Activated B cell treated with CpG ODN at 0.5 μM for 24 hours (primary cell): ENCODE measurements at regions of chr12 and their contacts with region 1.

Region 1: DNA sequence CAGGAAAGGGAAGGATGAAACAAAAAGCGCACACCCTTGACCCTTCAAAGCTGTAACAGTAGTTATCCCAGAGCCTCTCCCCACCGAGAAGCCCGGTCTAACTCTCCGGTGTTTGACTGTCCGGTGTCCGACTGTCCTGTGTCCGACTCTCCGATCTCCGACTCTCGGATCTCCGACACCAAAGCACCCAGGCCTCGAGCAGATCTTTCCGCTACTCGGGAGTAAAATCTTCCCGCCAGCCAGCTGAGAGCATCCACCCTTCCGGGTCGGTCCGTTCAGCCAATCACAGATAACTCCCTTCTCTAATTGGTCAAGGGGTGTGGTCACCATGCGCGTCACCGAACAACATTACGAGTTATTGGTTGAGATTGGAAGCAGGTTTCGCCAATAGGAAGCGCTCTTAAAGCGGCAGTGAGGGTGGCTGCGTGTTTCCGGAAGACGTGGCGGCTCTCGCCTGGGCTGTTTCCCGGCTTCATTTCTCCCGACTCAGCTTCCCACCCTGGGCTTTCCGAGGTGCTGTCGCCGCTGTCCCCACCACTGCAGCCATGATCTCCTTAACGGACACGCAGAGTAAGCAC is at the starts of genes GOLT1B and RECQL:
- DNase-seq: peak; percentile 71
- ATAC-seq: peak; percentile 95
- H3K4me3 Mint-ChIP-seq: no peak within 1 kb of the TSS
- H3K27ac Mint-ChIP-seq: no peak within 1 kb of the TSS
- H3K4me1 Mint-ChIP-seq: peaks cover 41% of the 10 kb centered on the region
- H3K27me3 Mint-ChIP-seq: no peaks in the 10 kb centered on the region
- CTCF ChIP-seq: no peak
- total RNA-seq, gene GOLT1B: 23.6 and 25.9 TPM in 2 replicates
- total RNA-seq, gene RECQL: 60.6 and 61.6 TPM in 2 replicates

Region 2: GRCh38 chr12:21486000-21486399 is 15.5 kb before region 1 on chr12:
- CTCF ChIA-PET with region 1: no interaction called
- POLR2A ChIA-PET with region 1: interaction called, 6 read pairs
- intact Hi-C with region 1: loop called (anchors 2 kb)
- DNase-seq: no peak
- ATAC-seq: no peak
- H3K4me3 Mint-ChIP-seq: no peak overlapping the region
- H3K27ac Mint-ChIP-seq: no peak overlapping the region
- H3K4me1 Mint-ChIP-seq: no peaks in the 10 kb centered on the region
- H3K27me3 Mint-ChIP-seq: no peaks in the 10 kb centered on the region
- CTCF ChIP-seq: no peak

Region 3: DNA sequence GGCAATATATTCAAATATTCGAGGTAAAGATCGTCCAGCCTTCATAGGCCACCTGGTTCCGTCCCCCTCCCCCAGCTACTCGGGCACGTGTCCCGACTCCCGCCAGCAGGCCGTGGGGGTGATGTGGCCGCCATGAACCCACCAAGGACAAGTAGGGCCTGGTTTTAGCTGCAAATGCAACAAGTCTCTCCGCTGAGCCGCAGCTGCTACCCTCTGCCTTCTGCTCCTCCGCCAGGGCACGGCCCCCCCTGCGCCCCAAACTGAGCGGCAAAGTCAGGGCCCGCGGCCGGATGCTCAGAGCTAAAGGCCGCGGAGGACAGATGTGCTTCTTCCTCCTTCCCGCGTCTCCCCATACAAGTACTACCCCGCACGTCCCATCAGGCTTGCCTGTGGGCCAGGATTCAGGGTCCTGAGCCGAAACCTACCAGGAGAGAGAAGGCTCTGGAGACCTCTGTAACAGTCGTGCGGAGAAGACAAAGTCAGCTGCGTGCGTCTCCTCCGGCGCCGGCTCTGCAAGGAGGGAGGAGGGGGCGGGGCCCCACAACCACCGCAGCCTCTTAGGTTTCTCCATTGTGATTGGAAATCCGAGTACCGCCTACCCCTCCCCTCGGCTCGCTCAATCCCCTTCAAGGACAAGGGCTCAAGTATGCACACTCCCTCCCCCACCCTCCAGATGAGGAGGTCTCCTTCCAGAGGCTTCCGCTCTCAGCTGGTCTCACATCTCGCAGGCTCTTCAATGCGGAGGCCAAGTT is 156.0 kb after region 1 on chr12 and contains the start of gene LDHB:
- CTCF ChIA-PET with region 1: no interaction called
- POLR2A ChIA-PET with region 1: interaction called, 36 read pairs
- intact Hi-C with region 1: loop called (anchors 1 kb)
- DNase-seq: peak; percentile 72
- ATAC-seq: peak; percentile 97
- H3K4me3 Mint-ChIP-seq: peak within 1 kb of the TSS; percentile 99
- H3K27ac Mint-ChIP-seq: peak within 1 kb of the TSS; percentile 97
- H3K4me1 Mint-ChIP-seq: peaks cover 24% of the 10 kb centered on the region
- H3K27me3 Mint-ChIP-seq: peaks cover 3% of the 10 kb centered on the region
- CTCF ChIP-seq: no peak
- total RNA-seq, gene LDHB: 385 and 440 TPM in 2 replicates

Region 4: DNA sequence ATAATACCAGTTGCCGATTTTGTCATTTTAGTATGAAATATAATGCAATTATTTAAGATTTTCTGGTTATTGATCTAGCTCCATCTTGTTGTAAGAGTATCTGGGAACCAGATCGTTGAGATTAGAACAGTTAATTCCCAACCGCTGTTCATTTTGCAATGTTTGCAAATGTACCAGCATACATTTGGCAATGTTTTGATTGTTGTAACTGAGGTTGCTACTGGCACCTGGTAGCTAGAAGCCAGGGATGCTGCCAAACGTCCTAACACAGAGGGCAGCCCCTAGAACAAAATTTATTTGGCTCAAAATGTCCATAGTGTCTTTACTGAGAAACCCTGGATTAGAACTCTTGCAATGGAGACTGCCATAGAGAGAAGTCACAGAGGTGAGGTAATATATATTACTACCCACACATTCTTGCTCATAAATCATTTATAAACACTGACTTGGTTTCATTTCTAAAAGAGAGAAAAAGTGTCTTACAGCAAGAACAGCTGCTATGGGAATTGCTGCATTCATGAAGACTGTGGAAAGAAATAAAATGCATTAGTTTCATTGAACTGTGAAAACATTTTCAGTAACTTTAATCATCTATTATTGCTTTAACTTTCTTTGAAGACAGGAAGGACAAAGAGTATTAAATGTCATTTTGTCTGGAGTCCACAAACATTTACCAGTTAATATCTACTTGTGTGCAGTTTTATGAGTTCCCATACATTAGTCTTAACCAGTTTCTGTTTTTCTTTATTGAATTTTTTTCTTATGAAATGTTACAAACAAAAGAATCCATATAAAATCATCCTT is 393.5 kb after region 1 on chr12:
- CTCF ChIA-PET with region 1: no interaction called
- POLR2A ChIA-PET with region 1: no interaction called
- intact Hi-C with region 1: no loop called
- DNase-seq: no peak
- ATAC-seq: no peak
- H3K4me3 Mint-ChIP-seq: no peak overlapping the region
- H3K27ac Mint-ChIP-seq: no peak overlapping the region
- H3K4me1 Mint-ChIP-seq: no peaks in the 10 kb centered on the region
- H3K27me3 Mint-ChIP-seq: no peaks in the 10 kb centered on the region
- CTCF ChIP-seq: no peak

Region 5: DNA sequence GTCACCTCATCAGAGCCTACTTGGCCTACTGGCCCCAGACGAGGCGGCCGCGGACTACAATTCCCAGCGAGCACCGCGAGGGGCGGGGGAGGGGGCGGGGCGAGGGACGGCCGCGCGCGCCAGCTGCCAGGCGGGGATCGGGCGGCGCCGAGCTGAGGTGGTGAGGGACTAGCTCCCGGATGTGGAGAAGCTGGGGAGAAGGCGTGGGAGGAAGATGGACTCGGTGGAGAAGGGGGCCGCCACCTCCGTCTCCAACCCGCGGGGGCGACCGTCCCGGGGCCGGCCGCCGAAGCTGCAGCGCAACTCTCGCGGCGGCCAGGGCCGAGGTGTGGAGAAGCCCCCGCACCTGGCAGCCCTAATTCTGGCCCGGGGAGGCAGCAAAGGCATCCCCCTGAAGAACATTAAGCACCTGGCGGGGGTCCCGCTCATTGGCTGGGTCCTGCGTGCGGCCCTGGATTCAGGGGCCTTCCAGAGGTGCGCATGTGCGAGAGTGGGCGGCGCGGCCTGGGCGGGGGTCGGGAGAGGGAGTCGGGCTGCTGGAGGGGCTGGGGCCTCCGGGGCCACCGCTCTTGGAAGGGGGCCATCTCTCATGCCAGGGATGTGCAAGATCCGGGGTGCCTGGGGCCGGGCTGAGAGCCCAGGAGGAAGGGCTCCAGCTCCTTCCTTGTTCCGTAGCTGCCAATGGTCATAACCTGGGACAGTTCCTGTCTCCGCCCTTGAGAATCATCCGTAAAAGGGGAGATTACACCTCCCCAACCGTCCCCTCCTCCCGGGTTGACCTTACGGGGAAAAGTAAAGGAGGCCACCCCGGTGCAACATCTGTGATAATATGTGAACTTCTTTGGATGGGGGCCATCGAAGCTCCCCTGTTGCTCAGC is 544.9 kb after region 1 on chr12 and contains the start of gene CMAS:
- CTCF ChIA-PET with region 1: no interaction called
- POLR2A ChIA-PET with region 1: no interaction called
- intact Hi-C with region 1: loop called (anchors 1 kb)
- DNase-seq: peak; percentile 62
- ATAC-seq: peak; percentile 91
- H3K4me3 Mint-ChIP-seq: peak within 1 kb of the TSS; percentile 94
- H3K27ac Mint-ChIP-seq: peak within 1 kb of the TSS; percentile 81
- H3K4me1 Mint-ChIP-seq: peaks cover 15% of the 10 kb centered on the region
- H3K27me3 Mint-ChIP-seq: peaks cover 1% of the 10 kb centered on the region
- CTCF ChIP-seq: no peak
- total RNA-seq, gene CMAS: 15.8 and 16.2 TPM in 2 replicates

Region 6: GRCh38 chr12:22409377-22410164 is 908.1 kb after region 1 on chr12:
- CTCF ChIA-PET with region 1: no interaction called
- POLR2A ChIA-PET with region 1: no interaction called
- intact Hi-C with region 1: no loop called
- DNase-seq: no peak
- ATAC-seq: no peak
- H3K4me3 Mint-ChIP-seq: no peak overlapping the region
- H3K27ac Mint-ChIP-seq: no peak overlapping the region
- H3K4me1 Mint-ChIP-seq: no peaks in the 10 kb centered on the region
- H3K27me3 Mint-ChIP-seq: no peaks in the 10 kb centered on the region
- CTCF ChIP-seq: no peak